PC-3 (cell line): ENCODE measurements at regions of chr4 and their contacts with region 1.

Region 1: GRCh38 chr4:173168396-173169177 is at the start of gene GALNT7:
- DNase-seq: peak; percentile 71
- ATAC-seq: peak; percentile 63
- H3K4me3 ChIP-seq: peak within 1 kb of the TSS; percentile 93
- H3K27ac ChIP-seq: peak within 1 kb of the TSS; percentile 83
- H3K4me1 ChIP-seq: peaks cover 21% of the 10 kb centered on the region
- H3K27me3 ChIP-seq: no peaks in the 10 kb centered on the region
- CTCF ChIP-seq: no peak
- total RNA-seq, gene GALNT7: 13.8 and 16.3 TPM in 2 replicates

Region 2: DNA sequence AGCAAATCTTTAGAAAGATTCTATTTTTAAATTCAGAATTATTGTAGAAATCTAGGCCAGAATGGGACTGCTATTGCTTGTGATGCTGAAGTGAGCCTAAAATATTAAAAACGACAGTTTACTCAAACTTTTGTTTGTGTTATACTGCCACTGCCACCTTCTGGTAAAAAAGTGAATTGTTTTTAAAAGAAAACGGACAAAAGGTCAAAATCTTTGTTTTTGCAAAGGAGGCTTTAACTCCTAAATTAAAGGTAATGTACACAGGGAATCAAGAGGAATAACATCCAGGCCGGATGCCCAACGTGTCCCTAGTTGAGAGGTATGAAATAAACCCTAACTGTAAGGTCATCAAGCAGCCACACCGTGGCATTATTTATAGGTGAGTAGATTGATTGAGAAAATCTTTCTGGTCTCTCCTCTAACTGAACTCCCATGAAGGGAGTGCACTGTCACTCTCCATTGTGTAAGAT is 338.3 kb before region 1 on chr4:
- CTCF ChIA-PET with region 1: interaction called, 17 read pairs
- POLR2A ChIA-PET with region 1: no interaction called
- intact Hi-C with region 1: no loop called
- DNase-seq: peak; percentile 62
- ATAC-seq: no peak
- H3K4me3 ChIP-seq: no peak overlapping the region
- H3K27ac ChIP-seq: no peak overlapping the region
- H3K4me1 ChIP-seq: peaks cover 6% of the 10 kb centered on the region; the same call in 1 of the 2 replicates
- H3K27me3 ChIP-seq: no peaks in the 10 kb centered on the region
- CTCF ChIP-seq: peak; percentile 69

Region 3: GRCh38 chr4:172950990-172951389 is 217.6 kb before region 1 on chr4:
- CTCF ChIA-PET with region 1: no interaction called
- POLR2A ChIA-PET with region 1: no interaction called
- intact Hi-C with region 1: no loop called
- DNase-seq: no peak
- ATAC-seq: no peak
- H3K4me3 ChIP-seq: no peak overlapping the region
- H3K27ac ChIP-seq: no peak overlapping the region
- H3K4me1 ChIP-seq: peaks cover 11% of the 10 kb centered on the region
- H3K27me3 ChIP-seq: 0 out of 2 replicates have a peak, but pooled peaks cover 6% of the 10 kb centered on the region
- CTCF ChIP-seq: no peak

Region 4: DNA sequence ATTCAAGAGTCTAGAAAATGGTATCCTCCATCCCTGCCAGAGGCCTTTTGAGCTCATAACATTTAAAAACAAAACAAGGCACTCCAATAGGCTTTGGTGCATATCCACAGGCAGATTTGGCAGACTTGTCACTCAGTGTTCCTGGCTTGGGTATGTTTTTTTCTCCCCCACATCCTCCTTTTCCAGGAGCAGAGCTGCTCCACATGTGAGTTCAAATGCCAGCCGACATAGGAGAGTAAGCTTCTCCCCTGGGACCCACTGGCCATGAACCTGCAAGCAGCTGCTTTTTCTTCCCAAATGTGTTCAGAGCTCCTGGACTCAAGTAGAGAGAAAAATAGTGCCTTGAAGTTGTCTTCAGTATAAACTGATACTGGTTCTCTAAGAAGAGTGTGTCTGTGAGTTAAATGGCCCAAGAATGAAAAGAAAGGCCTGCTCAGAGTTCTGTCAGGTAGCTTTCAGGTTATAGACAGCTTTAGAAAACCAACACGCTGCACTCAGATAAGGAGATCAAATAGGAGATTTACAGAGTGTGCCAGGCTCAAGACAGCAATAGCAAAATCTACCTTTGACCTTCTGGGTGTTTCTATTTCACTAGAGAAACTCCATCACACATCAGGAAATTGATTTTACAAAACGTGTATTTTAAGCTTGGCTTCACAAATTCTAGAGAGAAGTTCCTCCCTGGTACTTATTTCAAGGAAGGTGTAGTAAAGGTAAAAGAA is 162.5 kb before region 1 on chr4:
- CTCF ChIA-PET with region 1: interaction called, 10 read pairs
- POLR2A ChIA-PET with region 1: no interaction called
- intact Hi-C with region 1: no loop called
- DNase-seq: no peak
- ATAC-seq: no peak
- H3K4me3 ChIP-seq: no peak overlapping the region
- H3K27ac ChIP-seq: no peak overlapping the region
- H3K4me1 ChIP-seq: peaks cover 9% of the 10 kb centered on the region
- H3K27me3 ChIP-seq: no peaks in the 10 kb centered on the region
- CTCF ChIP-seq: no peak

Region 5: GRCh38 chr4:173025131-173025530 is 143.5 kb before region 1 on chr4:
- CTCF ChIA-PET with region 1: interaction called, 8 read pairs
- POLR2A ChIA-PET with region 1: interaction called, 7 read pairs
- intact Hi-C with region 1: loop called (anchors 1 kb)
- DNase-seq: peak; percentile 79
- ATAC-seq: peak; percentile 81
- H3K4me3 ChIP-seq: no peak overlapping the region
- H3K27ac ChIP-seq: no peak overlapping the region
- H3K4me1 ChIP-seq: no peaks in the 10 kb centered on the region
- H3K27me3 ChIP-seq: no peaks in the 10 kb centered on the region
- CTCF ChIP-seq: peak; percentile 75

Region 6: GRCh38 chr4:173039617-173040577 is 128.7 kb before region 1 on chr4:
- CTCF ChIA-PET with region 1: no interaction called
- POLR2A ChIA-PET with region 1: no interaction called
- intact Hi-C with region 1: loop called (anchors 1 kb)
- DNase-seq: peak; percentile 41
- ATAC-seq: peak; percentile 53
- H3K4me3 ChIP-seq: peak overlapping the region; percentile 15; the same call in 1 of the 2 replicates
- H3K27ac ChIP-seq: peak overlapping the region; percentile 44
- H3K4me1 ChIP-seq: peaks cover 29% of the 10 kb centered on the region
- H3K27me3 ChIP-seq: no peaks in the 10 kb centered on the region
- CTCF ChIP-seq: no peak

Region 7: DNA sequence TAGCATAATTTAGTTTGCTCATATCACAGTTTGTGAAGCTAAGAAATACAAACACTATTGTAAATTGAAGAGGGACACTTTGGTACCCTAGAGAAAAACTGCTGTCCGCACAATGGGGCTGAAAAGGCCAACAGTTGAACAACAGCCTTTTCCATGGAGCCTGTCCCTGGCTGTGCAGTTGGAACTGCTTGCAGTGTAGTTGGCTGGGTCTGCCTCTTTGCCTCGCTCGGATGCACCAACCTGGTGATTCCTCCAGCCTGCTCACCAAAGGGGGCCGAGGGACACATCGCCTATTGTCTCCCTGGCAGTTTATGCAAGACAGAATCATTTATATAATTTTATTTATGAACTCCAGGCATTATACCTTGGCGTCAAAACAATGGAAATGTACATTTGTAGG is 16.5 kb before region 1 on chr4:
- CTCF ChIA-PET with region 1: no interaction called
- POLR2A ChIA-PET with region 1: no interaction called
- intact Hi-C with region 1: no loop called
- DNase-seq: no peak
- ATAC-seq: no peak
- H3K4me3 ChIP-seq: no peak overlapping the region
- H3K27ac ChIP-seq: no peak overlapping the region
- H3K4me1 ChIP-seq: no peaks in the 10 kb centered on the region
- H3K27me3 ChIP-seq: no peaks in the 10 kb centered on the region
- CTCF ChIP-seq: no peak

Region 8: GRCh38 chr4:173257732-173258717 is 89.4 kb after region 1 on chr4:
- CTCF ChIA-PET with region 1: no interaction called
- POLR2A ChIA-PET with region 1: no interaction called
- intact Hi-C with region 1: loop called (anchors 1 kb)
- DNase-seq: peak; percentile 73
- ATAC-seq: peak; percentile 95
- H3K4me3 ChIP-seq: no peak overlapping the region
- H3K27ac ChIP-seq: no peak overlapping the region
- H3K4me1 ChIP-seq: peaks cover under 1% of the 10 kb centered on the region; the same call in 1 of the 2 replicates
- H3K27me3 ChIP-seq: no peaks in the 10 kb centered on the region
- CTCF ChIP-seq: peak; percentile 89